ENCODE measurements at regions of chr3 and their contacts with region 1.

Region 1: GRCh38 chr3:48439820-48440589 is at the starts of genes CCDC51 and TMA7:
- DNase-seq: peak; percentile 96
- H3K4me3 ChIP-seq: peak within 1 kb of the TSS; percentile 73 to 91 (median 77)
- H3K27ac ChIP-seq: peak within 1 kb of the TSS; percentile 79
- H3K4me1 ChIP-seq: peaks cover 16% of the 10 kb centered on the region
- H3K27me3 ChIP-seq: no peaks in the 10 kb centered on the region
- CTCF ChIP-seq: no peak
- POLR2A ChIP-seq: peak; percentile 75
- total RNA-seq, gene CCDC51: 9.8 and 11.2 TPM in 2 replicates
- total RNA-seq, gene TMA7: 306 and 332 TPM in 2 replicates

Region 2: DNA sequence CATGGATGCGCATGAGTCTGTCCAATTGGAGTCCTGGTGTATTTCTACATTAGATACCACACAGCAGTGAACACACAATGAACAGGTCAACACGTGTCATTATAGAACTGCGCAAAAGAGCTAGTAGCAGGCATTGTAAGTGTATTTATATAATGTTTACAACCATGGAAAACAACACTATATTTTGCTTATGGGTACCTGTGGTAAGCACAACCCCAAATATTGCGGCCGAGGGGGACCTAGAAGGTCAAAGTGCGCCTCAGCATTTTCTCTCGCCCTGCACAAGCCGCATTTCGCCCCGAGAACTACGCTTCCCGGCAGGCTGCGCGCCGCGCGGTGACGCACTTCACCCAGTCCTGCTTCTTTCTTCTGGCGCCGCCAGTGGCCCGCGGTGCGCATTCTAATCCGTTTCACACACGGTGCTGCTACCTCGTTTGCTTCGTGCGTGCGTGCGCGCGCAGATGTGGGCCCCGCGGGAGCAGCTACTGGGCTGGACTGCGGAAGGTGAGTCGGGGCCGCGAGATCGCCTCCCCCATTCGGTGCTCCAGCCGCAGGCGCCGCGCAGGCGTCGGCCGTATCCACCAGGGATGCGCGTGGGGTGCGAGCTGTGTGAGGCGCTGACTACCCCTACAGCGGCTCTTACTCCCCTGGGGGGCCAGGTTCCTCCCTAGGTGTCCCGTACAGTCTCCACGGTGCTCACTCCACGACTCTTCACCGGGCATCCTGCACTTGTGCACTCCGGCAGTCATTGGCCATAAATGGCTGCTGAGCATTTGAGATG is 199.1 kb before region 1 on chr3 and contains the start of gene ZNF589:
- CTCF ChIA-PET with region 1: interaction called, 296 read pairs
- POLR2A ChIA-PET with region 1: interaction called, 5 read pairs
- dilution Hi-C with region 1: no loop called
- intact Hi-C with region 1: no loop called
- DNase-seq: peak; percentile 96
- H3K4me3 ChIP-seq: peak within 1 kb of the TSS; percentile 72 to 94 (median 82)
- H3K27ac ChIP-seq: peak within 1 kb of the TSS; percentile 84
- H3K4me1 ChIP-seq: no peaks in the 10 kb centered on the region
- H3K27me3 ChIP-seq: no peaks in the 10 kb centered on the region
- CTCF ChIP-seq: peak; percentile 5 to 37
- POLR2A ChIP-seq: peak; percentile 93
- total RNA-seq, gene ZNF589: 12.4 and 13.4 TPM in 2 replicates

Region 3: DNA sequence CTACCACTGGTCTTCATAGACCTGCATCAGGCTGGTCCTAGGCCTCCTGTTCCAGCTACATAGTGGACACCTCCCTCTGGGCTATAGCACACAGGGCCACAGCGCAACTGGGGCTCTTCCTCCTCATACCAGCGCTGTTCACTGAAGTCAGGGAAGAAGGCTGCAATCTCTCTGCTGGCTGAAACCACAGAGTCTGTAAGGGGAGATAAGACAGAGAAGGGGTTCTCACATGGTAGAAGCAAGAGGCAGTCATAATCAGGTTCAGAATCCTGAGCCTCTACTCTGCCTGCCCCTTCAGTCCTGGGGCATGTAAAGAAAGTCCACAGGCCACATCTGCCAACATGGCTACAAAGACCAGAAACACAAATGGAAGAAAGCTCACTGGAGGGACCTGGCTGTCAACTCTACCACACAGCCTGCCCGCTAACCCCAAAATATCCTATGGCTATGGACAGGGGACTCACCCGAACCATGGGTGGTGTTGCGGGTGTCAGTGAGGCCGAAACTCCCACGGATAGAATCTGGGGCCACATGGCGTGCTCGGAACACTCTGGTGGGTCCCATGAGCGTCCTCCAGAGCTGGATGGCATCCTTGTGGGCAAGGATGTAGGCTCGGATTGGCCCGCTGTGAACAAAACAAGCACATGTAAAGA is 145.3 kb before region 1 on chr3:
- CTCF ChIA-PET with region 1: interaction called, 21 read pairs
- POLR2A ChIA-PET with region 1: no interaction called
- dilution Hi-C with region 1: no loop called
- intact Hi-C with region 1: no loop called
- DNase-seq: no peak
- H3K4me3 ChIP-seq: no peak overlapping the region
- H3K27ac ChIP-seq: no peak overlapping the region
- H3K4me1 ChIP-seq: no peaks in the 10 kb centered on the region
- H3K27me3 ChIP-seq: no peaks in the 10 kb centered on the region
- CTCF ChIP-seq: no peak
- POLR2A ChIP-seq: no peak

Region 4: DNA sequence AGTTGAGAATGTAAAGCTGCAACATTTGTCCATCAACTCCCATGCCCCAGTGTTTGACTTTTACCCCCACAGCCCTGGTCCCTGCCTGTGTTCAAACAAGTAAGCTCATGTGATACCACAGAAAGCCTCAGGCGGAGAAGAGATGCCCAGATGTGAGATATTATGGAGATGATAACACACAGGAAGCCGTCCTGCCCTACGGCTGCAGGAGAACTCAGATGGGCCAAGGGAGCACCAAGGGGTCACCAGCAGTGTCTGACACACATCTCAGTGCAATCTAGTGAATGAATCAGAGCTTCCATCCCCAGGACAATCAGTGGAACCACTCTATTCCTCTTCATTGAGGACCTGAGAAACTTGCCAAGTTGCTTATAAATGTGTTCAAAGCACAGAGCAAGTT is 92.5 kb before region 1 on chr3:
- CTCF ChIA-PET with region 1: interaction called, 15 read pairs
- POLR2A ChIA-PET with region 1: no interaction called
- dilution Hi-C with region 1: no loop called
- intact Hi-C with region 1: no loop called
- DNase-seq: no peak
- H3K4me3 ChIP-seq: no peak overlapping the region
- H3K27ac ChIP-seq: no peak overlapping the region
- H3K4me1 ChIP-seq: no peaks in the 10 kb centered on the region
- H3K27me3 ChIP-seq: peaks cover 21 to 38% of the 10 kb centered on the region in 2 experiments
- CTCF ChIP-seq: no peak
- POLR2A ChIP-seq: no peak

Region 5: DNA sequence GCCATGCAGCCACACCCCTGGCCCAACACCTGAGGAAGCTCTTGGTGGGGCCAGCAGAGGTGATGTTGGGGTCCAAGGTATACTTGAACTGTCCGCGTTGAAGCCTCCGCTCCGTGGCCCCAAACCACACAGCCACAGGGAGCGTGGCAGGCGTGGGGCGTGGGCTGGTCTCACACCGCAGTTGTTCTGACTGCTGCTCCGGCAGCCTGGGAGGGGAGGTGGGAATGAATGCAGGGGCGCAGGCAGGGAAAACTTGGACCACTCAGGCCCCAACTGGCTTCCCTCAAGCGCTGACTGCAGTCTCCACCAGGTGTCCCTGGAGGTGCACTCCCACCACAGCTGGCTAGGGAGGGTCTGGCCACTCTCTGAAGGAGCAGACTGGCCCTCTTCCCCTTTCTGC is 24.5 kb before region 1 on chr3:
- CTCF ChIA-PET with region 1: interaction called, 46 read pairs
- POLR2A ChIA-PET with region 1: no interaction called
- dilution Hi-C with region 1: no loop called
- intact Hi-C with region 1: no loop called
- DNase-seq: no peak
- H3K4me3 ChIP-seq: no peak overlapping the region
- H3K27ac ChIP-seq: no peak overlapping the region
- H3K4me1 ChIP-seq: no peaks in the 10 kb centered on the region
- H3K27me3 ChIP-seq: no peaks in the 10 kb centered on the region
- CTCF ChIP-seq: no peak
- POLR2A ChIP-seq: no peak

Region 6: GRCh38 chr3:48472915-48473616 is 33.1 kb after region 1 on chr3:
- CTCF ChIA-PET with region 1: interaction called, 23 read pairs
- POLR2A ChIA-PET with region 1: no interaction called
- dilution Hi-C with region 1: no loop called
- intact Hi-C with region 1: no loop called
- DNase-seq: peak; percentile 90
- H3K4me3 ChIP-seq: peak overlapping the region; percentile 52 to 98 (median 98)
- H3K27ac ChIP-seq: peak overlapping the region; percentile 95
- H3K4me1 ChIP-seq: peaks cover 10% of the 10 kb centered on the region
- H3K27me3 ChIP-seq: no peaks in the 10 kb centered on the region
- CTCF ChIP-seq: peak; percentile 34 to 56
- POLR2A ChIP-seq: peak; percentile 91